ENCODE measurements at regions of chr2 and their contacts with region 1.

Region 1: DNA sequence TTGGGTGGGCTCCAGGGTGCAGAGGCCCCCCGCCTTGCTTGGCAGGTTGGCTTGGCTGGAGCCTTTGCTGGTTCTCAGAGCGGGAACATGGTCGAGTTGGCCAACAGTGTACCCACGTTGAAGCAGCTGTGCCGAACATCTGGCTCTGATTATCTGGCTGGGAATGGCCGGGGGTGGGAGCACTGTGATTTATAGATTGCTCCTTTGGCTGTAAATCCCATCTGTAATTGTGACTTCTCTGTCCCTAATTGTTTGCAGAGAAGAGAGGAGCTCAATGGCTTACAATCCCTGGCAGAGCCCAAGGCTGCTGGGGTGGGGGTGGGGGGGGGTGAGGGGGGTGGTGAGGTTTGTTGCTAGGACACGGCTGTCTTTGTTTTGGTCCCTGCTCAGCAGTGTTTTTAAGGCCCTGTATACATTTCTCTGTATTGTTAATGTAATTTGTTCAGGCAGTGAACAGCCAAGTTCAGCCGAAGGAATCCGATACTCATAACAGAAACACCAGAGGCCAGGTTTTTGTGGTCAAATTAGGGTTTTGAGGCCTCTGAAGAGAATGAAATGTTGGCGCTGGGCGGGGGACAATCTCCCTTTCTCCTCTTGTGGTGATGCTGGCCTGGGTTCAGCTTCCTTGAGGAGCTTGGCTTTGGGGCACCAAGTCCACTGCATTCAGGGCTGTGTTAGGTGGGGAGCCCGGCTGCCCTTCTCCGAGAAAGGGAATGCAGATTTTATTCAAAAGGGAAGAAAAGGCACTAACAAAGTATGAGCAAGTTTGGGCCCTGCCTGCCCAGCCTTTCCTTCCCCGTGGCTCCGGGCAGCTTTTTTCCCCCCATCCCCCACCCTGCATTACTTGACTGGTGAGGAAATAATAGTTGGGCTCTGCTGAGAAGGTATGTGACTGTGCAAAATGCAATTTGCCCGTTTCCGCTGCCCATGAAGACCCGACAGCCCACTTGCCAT is 82.5 kb downstream of the TCF7L1 start:
- DNase-seq: peak in 1 of 2 donors; percentile 64
- H3K4me3 ChIP-seq: peak overlapping the region in 1 of 2 donors; percentile 8
- H3K27ac ChIP-seq: peak overlapping the region; percentile 38 to 51
- H3K4me1 ChIP-seq: peaks cover 6 to 35% of the 10 kb centered on the region in 2 donors
- H3K27me3 ChIP-seq: no peaks in the 10 kb centered on the region
- CTCF ChIP-seq: no peak

Region 2: GRCh38 chr2:85243101-85244072 is 27.7 kb after region 1 on chr2:
- intact Hi-C with region 1: loop called (anchors 2 kb)
- DNase-seq: no peak
- H3K4me3 ChIP-seq: no peak overlapping the region
- H3K27ac ChIP-seq: no peak overlapping the region
- H3K4me1 ChIP-seq: peaks cover 4 to 38% of the 10 kb centered on the region in 2 donors
- H3K27me3 ChIP-seq: no peaks in the 10 kb centered on the region
- CTCF ChIP-seq: peak; percentile 10 to 47 (median 23)

Region 3: DNA sequence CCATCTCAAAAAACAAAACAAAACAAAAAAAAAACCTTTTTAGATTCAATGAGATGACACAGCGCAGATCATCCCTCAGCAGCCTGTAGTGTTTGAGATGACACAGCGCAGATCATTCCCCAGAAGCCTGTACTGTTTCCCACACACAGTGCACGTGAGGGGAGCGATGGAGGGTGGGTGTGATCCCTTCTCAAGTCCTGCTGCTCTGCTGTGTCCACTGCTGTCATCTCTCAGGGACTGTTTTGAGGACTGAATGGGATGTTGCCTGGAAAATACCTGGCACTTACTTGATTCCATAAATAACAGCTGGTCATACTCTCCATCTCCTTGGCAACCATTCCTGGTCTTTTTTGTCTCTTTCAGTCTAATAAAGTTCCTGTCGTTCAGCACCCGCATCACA is 86.4 kb after region 1 on chr2:
- intact Hi-C with region 1: no loop called
- DNase-seq: no peak
- H3K4me3 ChIP-seq: no peak overlapping the region
- H3K27ac ChIP-seq: no peak overlapping the region
- H3K4me1 ChIP-seq: no peaks in the 10 kb centered on the region
- H3K27me3 ChIP-seq: no peaks in the 10 kb centered on the region
- CTCF ChIP-seq: no peak

Measured in ascending aorta (tissue), 2 donors.